HepG2 (cell line): ENCODE measurements at regions of chr20 and their contacts with region 1.

Region 1: DNA sequence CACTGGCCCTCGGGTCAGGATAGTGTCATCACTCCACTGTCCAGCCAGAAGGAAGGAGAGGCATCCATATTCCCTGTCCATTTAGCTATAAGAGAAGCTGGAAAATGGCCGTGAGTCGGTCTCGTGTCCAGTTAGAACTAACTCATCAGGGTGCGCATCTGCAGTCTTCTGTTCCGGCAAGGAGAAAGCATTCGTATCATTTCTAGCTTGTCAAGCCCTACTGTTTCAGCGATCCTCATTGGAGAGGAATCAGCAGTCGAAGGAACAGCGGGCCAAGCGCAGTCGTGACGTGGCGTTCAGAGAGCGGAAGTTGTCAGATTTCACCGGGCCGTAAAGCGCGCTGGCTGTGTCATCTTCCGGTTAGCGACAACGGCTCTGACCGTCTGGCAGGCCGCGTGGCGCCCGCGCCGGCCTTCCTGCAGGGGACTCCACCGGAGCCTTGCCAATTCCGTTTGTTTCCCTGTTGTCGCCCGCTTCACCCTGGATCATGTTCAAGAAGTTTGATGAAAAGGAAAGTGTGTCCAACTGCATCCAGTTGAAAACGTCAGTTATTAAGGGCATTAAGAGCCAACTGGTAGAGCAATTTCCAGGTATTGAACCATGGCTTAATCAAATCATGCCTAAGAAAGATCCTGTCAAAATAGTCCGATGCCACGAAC is 32.9 kb downstream of the HM13 start:
- DNase-seq: peak; percentile 88
- ATAC-seq: peak; percentile 79
- H3K4me3 ChIP-seq: peak overlapping the region; percentile 66 to 72 (median 68)
- H3K27ac ChIP-seq: peak overlapping the region; percentile 92
- H3K4me1 ChIP-seq: peaks cover 26% of the 10 kb centered on the region
- H3K27me3 ChIP-seq: no peaks in the 10 kb centered on the region
- CTCF ChIP-seq: peak; percentile 35
- EP300 ChIP-seq: no peak
- POLR2A ChIP-seq: peak; percentile 78 to 89
- RAD21 ChIP-seq: peak; percentile 37; the same call in 1 of the 2 replicates

Region 2: DNA sequence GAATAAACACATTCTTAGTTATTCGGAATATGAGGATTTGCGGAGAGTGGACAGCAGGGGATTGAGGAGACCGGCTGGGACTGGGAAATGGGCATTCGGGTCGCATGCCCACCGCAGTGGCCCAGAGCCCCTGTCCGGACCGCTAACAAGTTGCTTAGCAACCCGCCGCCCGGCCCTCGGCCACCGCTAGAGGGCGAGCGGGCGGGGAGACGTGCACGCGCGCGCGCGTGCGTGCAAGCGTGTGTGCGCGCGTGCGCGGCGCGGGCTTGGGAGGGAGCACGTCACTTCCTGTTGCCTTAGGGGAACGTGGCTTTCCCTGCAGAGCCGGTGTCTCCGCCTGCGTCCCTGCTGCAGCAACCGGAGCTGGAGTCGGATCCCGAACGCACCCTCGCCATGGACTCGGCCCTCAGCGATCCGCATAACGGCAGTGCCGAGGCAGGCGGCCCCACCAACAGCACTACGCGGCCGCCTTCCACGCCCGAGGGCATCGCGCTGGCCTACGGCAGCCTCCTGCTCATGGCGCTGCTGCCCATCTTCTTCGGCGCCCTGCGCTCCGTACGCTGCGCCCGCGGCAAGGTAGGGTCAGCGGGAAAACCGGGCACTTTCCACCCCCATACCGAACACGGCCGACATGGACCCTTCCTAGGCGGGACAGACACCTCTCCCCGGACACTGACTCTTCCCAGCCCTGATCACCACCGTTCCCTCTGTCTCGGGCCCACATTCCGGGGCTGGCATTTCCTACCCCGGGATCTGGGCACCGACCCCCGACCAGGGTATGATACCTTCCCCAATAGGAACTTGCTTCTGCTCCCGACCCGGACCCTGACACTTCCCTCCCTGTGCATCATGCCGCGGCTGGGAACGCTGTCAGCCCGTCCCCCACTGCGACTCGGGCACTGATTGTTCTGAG is 32.7 kb before region 1 on chr20 and contains the start of gene HM13:
- CTCF ChIA-PET with region 1: no interaction called
- POLR2A ChIA-PET with region 1: interaction called, 11 read pairs
- in situ Hi-C with region 1: no loop called
- intact Hi-C with region 1: loop called (anchors 1 kb)
- DNase-seq: peak; percentile 93
- ATAC-seq: peak; percentile 88
- H3K4me3 ChIP-seq: peak within 1 kb of the TSS; percentile 83 to 96 (median 92)
- H3K27ac ChIP-seq: peak within 1 kb of the TSS; percentile 75
- H3K4me1 ChIP-seq: peaks cover 39% of the 10 kb centered on the region
- H3K27me3 ChIP-seq: no peaks in the 10 kb centered on the region; a peak in 1 of 5 replicates
- CTCF ChIP-seq: peak; percentile 94
- EP300 ChIP-seq: peak in 1 of 2 experiments; percentile 59; a peak in 3 of 4 replicates
- POLR2A ChIP-seq: peak; percentile 99 to 100
- RAD21 ChIP-seq: peak; percentile 75
- total RNA-seq, gene HM13: 68.4 and 118 TPM in 2 replicates

Region 3: GRCh38 chr20:31560094-31560899 is 13.2 kb after region 1 on chr20:
- CTCF ChIA-PET with region 1: no interaction called
- POLR2A ChIA-PET with region 1: interaction called, 10 read pairs
- in situ Hi-C with region 1: no loop called
- intact Hi-C with region 1: no loop called
- DNase-seq: peak; percentile 83
- ATAC-seq: peak; percentile 51
- H3K4me3 ChIP-seq: no peak overlapping the region
- H3K27ac ChIP-seq: peak overlapping the region; percentile 65
- H3K4me1 ChIP-seq: peaks cover 31% of the 10 kb centered on the region
- H3K27me3 ChIP-seq: no peaks in the 10 kb centered on the region
- CTCF ChIP-seq: peak; percentile 95
- EP300 ChIP-seq: peak in 1 of 2 experiments; percentile 33; a peak in 1 of 4 replicates
- POLR2A ChIP-seq: no peak
- RAD21 ChIP-seq: peak; percentile 85